ENCODE measurements at regions of chr2 and their contacts with region 1.

Region 1: DNA sequence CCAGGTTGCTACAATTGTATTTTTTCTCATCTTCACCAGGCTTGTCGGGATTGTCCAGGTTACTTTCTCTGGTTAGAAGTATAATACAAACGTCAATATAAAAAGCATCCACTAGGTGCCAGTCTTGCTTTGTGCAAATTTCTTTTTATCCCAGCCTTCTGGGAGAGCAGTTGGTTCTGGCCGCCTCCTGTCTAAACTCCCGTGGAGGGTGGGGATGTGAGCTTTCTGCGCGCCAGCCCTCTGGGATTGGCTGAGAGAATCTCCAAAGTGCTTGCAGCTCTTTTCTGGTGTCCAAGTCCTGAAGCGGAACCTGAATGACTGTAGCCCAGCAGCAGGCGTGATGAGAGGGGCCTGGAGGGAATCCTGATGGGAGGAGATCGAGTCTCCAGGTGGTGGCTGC is 22.4 kb upstream of the TOGARAM2 start:
- DNase-seq: peak; percentile 57 to 71
- H3K4me3 ChIP-seq: no peak overlapping the region
- H3K27ac ChIP-seq: no peak overlapping the region
- H3K4me1 ChIP-seq: no peaks in the 10 kb centered on the region
- H3K27me3 ChIP-seq: no peaks in the 10 kb centered on the region
- CTCF ChIP-seq: peak; percentile 89

Region 2: GRCh38 chr2:29010946-29011345 is 52.3 kb after region 1 on chr2:
- CTCF ChIA-PET with region 1: no interaction called
- POLR2A ChIA-PET with region 1: no interaction called
- intact Hi-C with region 1: loop called (anchors 1 kb)
- DNase-seq: no peak
- H3K4me3 ChIP-seq: no peak overlapping the region
- H3K27ac ChIP-seq: no peak overlapping the region
- H3K4me1 ChIP-seq: no peaks in the 10 kb centered on the region
- H3K27me3 ChIP-seq: no peaks in the 10 kb centered on the region
- CTCF ChIP-seq: no peak

Region 3: DNA sequence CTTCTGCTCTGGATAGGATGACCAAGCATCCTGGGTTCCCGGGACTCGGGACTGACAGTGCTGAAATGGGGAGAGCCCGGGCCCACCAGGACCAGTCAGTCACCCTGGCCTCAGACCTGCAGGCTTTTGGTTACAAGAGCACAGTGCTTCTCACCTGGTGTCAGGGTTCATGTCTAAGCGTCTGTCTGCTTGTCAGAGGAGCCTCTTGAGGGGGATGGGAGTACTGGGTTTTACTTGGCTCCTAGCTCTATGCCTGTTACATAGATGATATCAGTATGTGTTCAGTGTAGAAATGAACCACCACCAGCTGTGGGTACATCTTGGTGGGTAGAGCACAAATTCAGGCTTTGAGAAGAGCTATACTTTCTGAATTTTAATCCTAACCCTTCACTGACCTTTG is 85.8 kb after region 1 on chr2:
- CTCF ChIA-PET with region 1: no interaction called
- POLR2A ChIA-PET with region 1: no interaction called
- intact Hi-C with region 1: no loop called
- DNase-seq: no peak
- H3K4me3 ChIP-seq: no peak overlapping the region
- H3K27ac ChIP-seq: no peak overlapping the region
- H3K4me1 ChIP-seq: no peaks in the 10 kb centered on the region
- H3K27me3 ChIP-seq: no peaks in the 10 kb centered on the region
- CTCF ChIP-seq: no peak

Region 4: GRCh38 chr2:29115797-29116781 is 157.4 kb after region 1 on chr2:
- CTCF ChIA-PET with region 1: no interaction called
- POLR2A ChIA-PET with region 1: no interaction called
- intact Hi-C with region 1: loop called (anchors 5 kb)
- DNase-seq: peak; percentile 58 to 71
- H3K4me3 ChIP-seq: peak overlapping the region; percentile 90
- H3K27ac ChIP-seq: peak overlapping the region; percentile 97
- H3K4me1 ChIP-seq: peaks cover 70% of the 10 kb centered on the region
- H3K27me3 ChIP-seq: no peaks in the 10 kb centered on the region
- CTCF ChIP-seq: no peak

Region 5: DNA sequence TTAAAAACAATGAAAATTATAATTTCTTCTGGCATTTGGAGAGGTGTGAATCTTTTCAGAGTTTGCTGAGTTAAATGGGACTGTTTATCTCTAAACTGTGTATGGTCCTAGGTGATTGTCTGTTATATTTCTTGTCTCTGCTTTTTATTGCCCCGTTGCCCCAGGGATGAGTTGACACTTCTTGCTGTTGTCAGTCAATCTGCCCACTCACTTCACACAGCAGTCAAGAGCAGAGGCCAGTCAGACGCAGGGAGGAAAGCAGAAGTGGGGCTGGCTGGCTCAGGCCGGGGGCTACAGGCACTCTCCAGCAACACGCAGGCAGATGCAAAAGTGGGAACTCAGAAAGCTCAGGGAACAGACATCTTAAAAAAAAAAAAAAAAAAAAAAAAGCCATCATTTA is 521.7 kb after region 1 on chr2:
- CTCF ChIA-PET with region 1: no interaction called
- POLR2A ChIA-PET with region 1: no interaction called
- intact Hi-C with region 1: loop called (anchors 10 kb)
- DNase-seq: no peak
- H3K4me3 ChIP-seq: no peak overlapping the region
- H3K27ac ChIP-seq: no peak overlapping the region
- H3K4me1 ChIP-seq: no peaks in the 10 kb centered on the region
- H3K27me3 ChIP-seq: peaks cover 91% of the 10 kb centered on the region
- CTCF ChIP-seq: no peak

Region 6: DNA sequence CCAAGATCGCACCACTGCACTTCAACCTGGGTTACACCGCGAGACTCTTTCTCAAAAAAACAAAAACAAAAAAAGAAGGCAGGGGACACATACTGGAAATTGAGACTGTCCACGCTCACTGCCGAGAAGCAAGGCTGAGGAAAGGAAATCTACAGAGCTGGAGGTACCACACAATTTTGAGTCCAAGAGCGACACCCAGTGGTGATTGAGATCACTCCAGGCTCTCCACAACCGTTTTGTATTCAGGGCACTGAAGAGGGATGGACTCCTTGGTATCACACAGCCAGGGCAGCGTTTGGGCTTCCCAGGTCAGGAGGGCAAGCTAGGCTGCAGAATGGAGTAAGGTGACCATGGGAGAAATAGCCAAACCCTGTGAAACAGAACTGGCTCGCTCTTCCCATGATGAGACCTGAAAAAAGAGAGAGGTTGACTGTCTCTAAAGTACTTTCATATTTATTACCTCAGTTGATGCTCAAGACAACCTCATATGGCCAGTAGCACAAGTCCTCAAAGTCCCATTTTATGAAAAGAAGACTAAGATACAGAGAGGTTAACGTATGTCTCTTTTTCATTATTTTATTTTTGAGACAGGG is 1113.7 kb after region 1 on chr2:
- CTCF ChIA-PET with region 1: no interaction called
- POLR2A ChIA-PET with region 1: no interaction called
- intact Hi-C with region 1: loop called (anchors 2 kb)
- DNase-seq: peak; percentile 53 to 60
- H3K4me3 ChIP-seq: no peak overlapping the region
- H3K27ac ChIP-seq: no peak overlapping the region
- H3K4me1 ChIP-seq: no peaks in the 10 kb centered on the region
- H3K27me3 ChIP-seq: peaks cover 78% of the 10 kb centered on the region
- CTCF ChIP-seq: peak; percentile 81

Measured in PC-9 (cell line).